ENCODE measurements at regions of chr7 and their contacts with region 1.

Region 1: GRCh38 chr7:151017953-151018420 is 6.3 kb downstream of the ATG9B start:
- DNase-seq: peak; percentile 67 to 87 (median 75)
- ATAC-seq: peak; percentile 68
- H3K4me3 ChIP-seq: peak overlapping the region; percentile 65
- H3K4me3 Mint-ChIP-seq: peak overlapping the region; percentile 79 to 94 (median 88)
- H3K27ac ChIP-seq: peak overlapping the region; percentile 97
- H3K27ac Mint-ChIP-seq: peak overlapping the region; percentile 82 to 100 (median 94)
- H3K4me1 ChIP-seq: peaks cover 30 to 55% of the 10 kb centered on the region in 2 donors
- H3K4me1 Mint-ChIP-seq: peaks cover 35 to 67% (median 53%) of the 10 kb centered on the region in 7 donors
- H3K27me3 ChIP-seq: no peaks in the 10 kb centered on the region
- H3K27me3 Mint-ChIP-seq: peaks cover 0 to 35% (median 0%) of the 10 kb centered on the region in 5 donors

Region 2: GRCh38 chr7:150481186-150481920 is 536.6 kb before region 1 on chr7:
- CTCF ChIA-PET with region 1: no interaction called
- POLR2A ChIA-PET with region 1: interaction called, 3 read pairs
- intact Hi-C with region 1: loop called in 1 of 2 experiments (anchors 5 kb)
- DNase-seq: peak in 8 of 9 donors; percentile 46 to 81 (median 71)
- ATAC-seq: peak; percentile 68
- H3K4me3 ChIP-seq: peak overlapping the region; percentile 12
- H3K4me3 Mint-ChIP-seq: peak overlapping the region; percentile 79 to 97 (median 90)
- H3K27ac ChIP-seq: peak overlapping the region; percentile 95
- H3K27ac Mint-ChIP-seq: peak overlapping the region; percentile 97 to 100 (median 100)
- H3K4me1 ChIP-seq: peaks cover 84 to 89% of the 10 kb centered on the region in 2 donors
- H3K4me1 Mint-ChIP-seq: peaks cover 58 to 99% (median 92%) of the 10 kb centered on the region in 7 donors
- H3K27me3 ChIP-seq: no peaks in the 10 kb centered on the region
- H3K27me3 Mint-ChIP-seq: no peaks in the 10 kb centered on the region

Region 3: GRCh38 chr7:150642926-150643325 is 375.1 kb before region 1 on chr7:
- CTCF ChIA-PET with region 1: no interaction called
- POLR2A ChIA-PET with region 1: no interaction called
- intact Hi-C with region 1: no loop called
- DNase-seq: no peak
- ATAC-seq: no peak
- H3K4me3 ChIP-seq: no peak overlapping the region
- H3K4me3 Mint-ChIP-seq: peak overlapping the region in 1 of 10 donors; percentile 7
- H3K27ac ChIP-seq: no peak overlapping the region
- H3K27ac Mint-ChIP-seq: peak overlapping the region in 4 of 9 donors; percentile 23 to 88 (median 54)
- H3K4me1 ChIP-seq: peaks cover 7 to 47% of the 10 kb centered on the region in 2 donors
- H3K4me1 Mint-ChIP-seq: peaks cover 19 to 88% (median 74%) of the 10 kb centered on the region in 7 donors
- H3K27me3 ChIP-seq: no peaks in the 10 kb centered on the region
- H3K27me3 Mint-ChIP-seq: no peaks in the 10 kb centered on the region

Region 4: DNA sequence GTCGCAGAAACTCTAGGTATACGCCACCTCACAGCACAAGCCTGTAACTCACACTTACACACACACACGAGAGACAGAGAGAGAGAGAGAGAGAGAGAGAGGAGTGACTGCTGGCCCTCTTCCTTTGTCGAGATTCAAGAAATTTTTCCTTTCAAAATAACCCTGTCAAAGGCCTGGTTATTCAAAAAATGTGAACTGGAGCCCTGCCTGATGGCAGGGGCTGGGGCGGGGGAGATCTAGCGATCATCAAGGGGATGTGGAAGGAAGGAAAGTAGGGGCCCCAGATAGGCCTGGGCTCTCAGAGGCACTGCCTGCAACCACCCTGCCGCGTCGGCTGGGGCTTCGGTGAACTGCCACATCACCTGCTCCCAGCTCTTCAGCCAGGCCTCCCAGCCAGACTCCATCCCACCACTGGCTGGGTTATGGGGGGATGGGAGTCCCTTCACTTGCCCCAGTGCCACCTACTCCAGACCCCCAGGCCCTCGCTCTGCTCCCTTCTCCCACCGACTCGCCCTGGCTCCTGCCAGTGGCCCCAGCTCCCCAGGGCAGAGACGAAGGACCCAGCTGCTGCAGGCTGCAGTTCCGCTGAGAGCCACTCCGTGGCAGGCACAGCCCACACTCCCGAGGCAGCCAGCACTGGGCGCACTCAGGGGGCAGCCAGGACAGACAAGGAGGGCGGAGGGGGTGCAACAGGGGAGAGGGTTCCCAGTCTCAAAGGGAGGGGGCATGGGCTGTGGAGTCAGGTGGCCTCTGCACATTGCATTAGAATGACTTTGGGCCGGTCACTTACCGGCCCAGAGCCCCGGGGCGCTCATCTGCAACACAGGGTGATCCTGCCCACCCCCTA is 55.2 kb before region 1 on chr7:
- CTCF ChIA-PET with region 1: interaction called, 52 read pairs
- POLR2A ChIA-PET with region 1: interaction called, 4 read pairs
- intact Hi-C with region 1: loop called (anchors 1 kb)
- DNase-seq: peak; percentile 31 to 69 (median 53)
- ATAC-seq: peak; percentile 82
- H3K4me3 ChIP-seq: no peak overlapping the region
- H3K4me3 Mint-ChIP-seq: peak overlapping the region in 1 of 10 donors; percentile 51
- H3K27ac ChIP-seq: no peak overlapping the region
- H3K27ac Mint-ChIP-seq: no peak overlapping the region
- H3K4me1 ChIP-seq: no peaks in the 10 kb centered on the region
- H3K4me1 Mint-ChIP-seq: peaks cover 9 to 41% (median 24%) of the 10 kb centered on the region in 7 donors
- H3K27me3 ChIP-seq: no peaks in the 10 kb centered on the region
- H3K27me3 Mint-ChIP-seq: peaks cover 15 to 36% (median 20%) of the 10 kb centered on the region in 5 donors

Region 5: GRCh38 chr7:150988230-150989226 is 29.5 kb before region 1 on chr7:
- CTCF ChIA-PET with region 1: interaction called, 35 read pairs
- POLR2A ChIA-PET with region 1: interaction called, 33 read pairs
- intact Hi-C with region 1: loop called (anchors 1 to 2 kb)
- DNase-seq: peak; percentile 49 to 72 (median 64)
- ATAC-seq: peak; percentile 79
- H3K4me3 ChIP-seq: peak overlapping the region; percentile 10
- H3K4me3 Mint-ChIP-seq: peak overlapping the region; percentile 37 to 83 (median 72)
- H3K27ac ChIP-seq: no peak overlapping the region
- H3K27ac Mint-ChIP-seq: peak overlapping the region in 6 of 9 donors; percentile 5 to 65 (median 26)
- H3K4me1 ChIP-seq: peaks cover 12 to 21% of the 10 kb centered on the region in 2 donors
- H3K4me1 Mint-ChIP-seq: peaks cover 19 to 43% (median 31%) of the 10 kb centered on the region in 7 donors
- H3K27me3 ChIP-seq: no peaks in the 10 kb centered on the region
- H3K27me3 Mint-ChIP-seq: peaks cover 0 to 34% (median 0%) of the 10 kb centered on the region in 5 donors

Region 6: GRCh38 chr7:151057989-151058780 is 40.2 kb after region 1 on chr7:
- CTCF ChIA-PET with region 1: interaction called, 7 read pairs
- POLR2A ChIA-PET with region 1: interaction called, 6 read pairs
- intact Hi-C with region 1: loop called (anchors 1 kb)
- DNase-seq: peak; percentile 80 to 99 (median 97)
- ATAC-seq: peak; percentile 96
- H3K4me3 ChIP-seq: peak overlapping the region; percentile 78
- H3K4me3 Mint-ChIP-seq: peak overlapping the region; percentile 91 to 99 (median 94)
- H3K27ac ChIP-seq: peak overlapping the region; percentile 92
- H3K27ac Mint-ChIP-seq: peak overlapping the region; percentile 86 to 96 (median 93)
- H3K4me1 ChIP-seq: peaks cover 25 to 32% of the 10 kb centered on the region in 2 donors
- H3K4me1 Mint-ChIP-seq: peaks cover 25 to 41% (median 38%) of the 10 kb centered on the region in 7 donors
- H3K27me3 ChIP-seq: no peaks in the 10 kb centered on the region
- H3K27me3 Mint-ChIP-seq: no peaks in the 10 kb centered on the region

Region 7: DNA sequence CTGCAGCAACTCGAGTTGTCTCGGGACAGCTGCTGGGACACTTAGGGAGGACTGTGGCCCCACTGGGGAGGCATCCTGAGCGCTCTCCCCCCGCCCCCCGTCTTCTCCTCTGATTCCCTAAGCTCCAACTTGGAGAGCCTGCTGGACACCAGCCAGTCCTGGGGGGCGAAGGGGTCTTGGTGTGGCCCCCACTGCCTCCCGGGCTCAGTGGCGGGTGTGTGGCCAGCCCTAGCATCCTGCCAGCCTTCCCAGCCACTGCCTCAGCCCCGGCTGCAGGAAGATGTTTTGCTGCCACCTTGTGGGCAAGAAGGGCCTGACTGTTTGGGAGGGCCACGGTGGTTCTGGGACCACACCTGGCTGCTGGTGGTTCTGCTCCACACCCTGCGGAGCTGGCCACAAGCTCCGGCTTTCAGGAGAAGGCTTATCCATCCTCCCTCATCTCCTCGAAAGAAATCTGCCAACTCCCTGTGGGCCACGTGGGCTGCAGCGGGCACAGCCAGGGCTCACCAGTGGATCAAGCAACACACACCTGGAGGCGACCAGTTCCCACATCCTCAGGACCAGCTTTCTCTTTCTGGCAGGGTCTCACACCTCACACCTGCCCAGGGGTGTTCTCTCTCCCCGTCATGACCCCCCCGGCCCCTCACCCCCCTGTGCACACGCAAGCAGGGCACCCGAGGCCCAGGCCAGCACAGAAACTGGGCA is 93.1 kb after region 1 on chr7:
- CTCF ChIA-PET with region 1: interaction called, 5 read pairs
- POLR2A ChIA-PET with region 1: no interaction called
- intact Hi-C with region 1: loop called in 1 of 2 experiments (anchors 1 kb)
- DNase-seq: peak; percentile 41 to 79 (median 71)
- ATAC-seq: peak; percentile 82
- H3K4me3 ChIP-seq: no peak overlapping the region
- H3K4me3 Mint-ChIP-seq: peak overlapping the region in 1 of 10 donors; percentile 29
- H3K27ac ChIP-seq: no peak overlapping the region
- H3K27ac Mint-ChIP-seq: no peak overlapping the region
- H3K4me1 ChIP-seq: no peaks in the 10 kb centered on the region
- H3K4me1 Mint-ChIP-seq: peaks cover 0 to 9% (median 4%) of the 10 kb centered on the region in 7 donors
- H3K27me3 ChIP-seq: peaks cover 0 to 4% of the 10 kb centered on the region in 2 donors
- H3K27me3 Mint-ChIP-seq: peaks cover 0 to 20% (median 0%) of the 10 kb centered on the region in 5 donors

Measured in naive thymus-derived CD4-positive, alpha-beta T cell (primary cell).